Adrenal gland (tissue), 19 donors: ENCODE measurements at regions of chr11 and their contacts with region 1.

Region 1: GRCh38 chr11:79708300-79708932 is 267.6 kb upstream of the TENM4 start:
- DNase-seq: peak in 4 of 7 donors; percentile 17 to 34 (median 24)
- H3K4me3 ChIP-seq: no peak overlapping the region
- H3K27ac ChIP-seq: no peak overlapping the region
- H3K4me1 ChIP-seq: no peaks in the 10 kb centered on the region
- H3K27me3 ChIP-seq: no peaks in the 10 kb centered on the region
- CTCF ChIP-seq: peak; percentile 7 to 56 (median 48)
- POLR2A ChIP-seq: no peak

Region 2: GRCh38 chr11:79880271-79880670 is 171.9 kb after region 1 on chr11:
- intact Hi-C with region 1: no loop called
- DNase-seq: no peak
- H3K4me3 ChIP-seq: no peak overlapping the region
- H3K27ac ChIP-seq: no peak overlapping the region
- H3K4me1 ChIP-seq: no peaks in the 10 kb centered on the region
- H3K27me3 ChIP-seq: no peaks in the 10 kb centered on the region
- CTCF ChIP-seq: no peak
- POLR2A ChIP-seq: no peak

Region 3: DNA sequence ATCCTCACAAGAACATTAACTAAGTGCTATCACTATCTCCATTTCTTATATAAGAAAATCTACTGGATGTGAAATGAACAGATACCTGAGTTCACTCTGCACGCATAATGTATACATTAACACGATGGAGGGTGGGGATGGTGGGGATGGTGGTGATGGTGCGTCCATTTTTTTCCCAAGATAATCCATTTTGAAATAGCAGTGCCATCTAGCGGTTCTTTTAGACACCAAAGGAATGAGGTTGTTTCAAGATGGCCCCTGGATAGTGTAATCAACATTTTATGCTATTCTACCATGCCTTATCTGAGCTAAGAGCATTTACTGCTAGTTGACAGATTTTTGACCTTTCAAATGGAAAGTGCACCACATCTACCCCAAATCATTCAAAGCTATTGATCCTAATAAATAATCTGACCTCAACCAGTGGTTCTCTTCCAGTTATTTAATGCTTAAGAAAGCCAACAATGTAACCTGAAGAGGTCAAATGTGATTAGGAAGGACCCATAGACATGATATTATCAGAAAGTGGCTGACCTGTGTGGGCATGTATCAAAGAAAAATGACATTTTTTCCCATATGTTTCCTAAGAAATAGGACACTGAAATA is 447.1 kb after region 1 on chr11:
- intact Hi-C with region 1: loop called in 1 of 2 experiments (anchors 5 kb)
- DNase-seq: peak in 1 of 7 donors; percentile 4
- H3K4me3 ChIP-seq: no peak overlapping the region
- H3K27ac ChIP-seq: no peak overlapping the region
- H3K4me1 ChIP-seq: no peaks in the 10 kb centered on the region
- H3K27me3 ChIP-seq: no peaks in the 10 kb centered on the region
- CTCF ChIP-seq: peak; percentile 23 to 57 (median 49)
- POLR2A ChIP-seq: no peak